ENCODE measurements at regions of chr10 and their contacts with region 1.

Region 1: GRCh38 chr10:119715628-119716505 is 10.0 kb upstream of the INPP5F start:
- DNase-seq: no peak
- H3K4me3 ChIP-seq: no peak overlapping the region
- H3K27ac ChIP-seq: no peak overlapping the region
- H3K4me1 ChIP-seq: no peaks in the 10 kb centered on the region
- CTCF ChIP-seq: no peak

Region 2: GRCh38 chr10:119705434-119705831 is 10.4 kb before region 1 on chr10:
- CTCF ChIA-PET with region 1: interaction called, 7 read pairs
- POLR2A ChIA-PET with region 1: interaction called, 15 read pairs
- intact Hi-C with region 1: no loop called
- DNase-seq: peak; percentile 8
- H3K4me3 ChIP-seq: no peak overlapping the region
- H3K27ac ChIP-seq: no peak overlapping the region
- H3K4me1 ChIP-seq: peaks cover 48% of the 10 kb centered on the region
- CTCF ChIP-seq: no peak

Region 3: DNA sequence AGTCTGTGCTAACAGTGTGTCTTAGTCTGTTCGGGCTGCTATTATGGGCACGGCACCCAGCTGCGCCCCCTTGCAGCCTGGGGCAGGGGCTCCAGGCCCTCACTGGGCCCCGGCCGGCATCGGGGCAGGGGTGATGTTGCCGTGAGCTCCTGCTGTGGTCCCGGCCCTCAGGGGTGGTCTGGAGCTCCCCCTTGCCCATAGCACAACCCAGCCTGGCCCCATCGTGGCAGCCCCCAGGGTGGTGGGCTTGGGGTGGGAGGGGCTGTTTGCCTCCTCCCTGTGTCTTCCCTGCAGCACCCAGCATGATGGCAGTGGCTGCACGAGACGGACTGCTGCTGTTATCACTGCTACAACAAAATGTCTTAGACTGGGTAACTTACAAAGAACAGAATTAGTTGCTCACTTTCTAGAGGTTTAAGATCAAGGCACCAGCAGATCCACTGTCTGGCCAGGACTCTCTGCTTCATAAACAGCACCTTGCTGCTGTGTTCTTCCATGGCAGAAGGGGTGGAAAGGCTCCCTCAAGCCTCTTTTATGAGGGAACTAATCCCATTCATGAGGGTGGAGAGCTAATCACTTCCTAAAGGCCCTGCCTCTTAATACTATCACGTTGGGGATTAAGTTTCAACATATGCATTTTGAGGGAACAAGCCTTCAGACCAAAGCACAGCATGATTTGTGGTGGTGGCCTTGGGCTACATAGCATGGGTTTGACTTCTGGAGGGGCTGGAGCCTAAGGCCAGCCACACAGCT is 326.1 kb after region 1 on chr10:
- CTCF ChIA-PET with region 1: no interaction called
- POLR2A ChIA-PET with region 1: no interaction called
- intact Hi-C with region 1: no loop called
- DNase-seq: no peak
- H3K4me3 ChIP-seq: no peak overlapping the region
- H3K27ac ChIP-seq: no peak overlapping the region
- H3K4me1 ChIP-seq: no peaks in the 10 kb centered on the region
- CTCF ChIP-seq: no peak

Region 4: GRCh38 chr10:120406376-120406775 is 690.5 kb after region 1 on chr10:
- CTCF ChIA-PET with region 1: no interaction called
- POLR2A ChIA-PET with region 1: no interaction called
- intact Hi-C with region 1: no loop called
- DNase-seq: no peak
- H3K4me3 ChIP-seq: no peak overlapping the region
- H3K27ac ChIP-seq: no peak overlapping the region
- H3K4me1 ChIP-seq: no peaks in the 10 kb centered on the region
- CTCF ChIP-seq: no peak

Measured in OCI-LY7 (cell line).